ENCODE measurements at regions of chr12 and their contacts with region 1.

Region 1: GRCh38 chr12:2812290-2813213 is at the start of gene ITFG2:
- DNase-seq: peak; percentile 97 to 99 (median 99)
- H3K4me3 ChIP-seq: peak within 1 kb of the TSS; percentile 75 to 95 (median 88)
- H3K27ac ChIP-seq: peak within 1 kb of the TSS; percentile 81 to 88
- H3K4me1 ChIP-seq: peaks cover 9 to 25% (median 16%) of the 10 kb centered on the region in 4 experiments
- H3K27me3 ChIP-seq: no peaks in the 10 kb centered on the region

Region 2: DNA sequence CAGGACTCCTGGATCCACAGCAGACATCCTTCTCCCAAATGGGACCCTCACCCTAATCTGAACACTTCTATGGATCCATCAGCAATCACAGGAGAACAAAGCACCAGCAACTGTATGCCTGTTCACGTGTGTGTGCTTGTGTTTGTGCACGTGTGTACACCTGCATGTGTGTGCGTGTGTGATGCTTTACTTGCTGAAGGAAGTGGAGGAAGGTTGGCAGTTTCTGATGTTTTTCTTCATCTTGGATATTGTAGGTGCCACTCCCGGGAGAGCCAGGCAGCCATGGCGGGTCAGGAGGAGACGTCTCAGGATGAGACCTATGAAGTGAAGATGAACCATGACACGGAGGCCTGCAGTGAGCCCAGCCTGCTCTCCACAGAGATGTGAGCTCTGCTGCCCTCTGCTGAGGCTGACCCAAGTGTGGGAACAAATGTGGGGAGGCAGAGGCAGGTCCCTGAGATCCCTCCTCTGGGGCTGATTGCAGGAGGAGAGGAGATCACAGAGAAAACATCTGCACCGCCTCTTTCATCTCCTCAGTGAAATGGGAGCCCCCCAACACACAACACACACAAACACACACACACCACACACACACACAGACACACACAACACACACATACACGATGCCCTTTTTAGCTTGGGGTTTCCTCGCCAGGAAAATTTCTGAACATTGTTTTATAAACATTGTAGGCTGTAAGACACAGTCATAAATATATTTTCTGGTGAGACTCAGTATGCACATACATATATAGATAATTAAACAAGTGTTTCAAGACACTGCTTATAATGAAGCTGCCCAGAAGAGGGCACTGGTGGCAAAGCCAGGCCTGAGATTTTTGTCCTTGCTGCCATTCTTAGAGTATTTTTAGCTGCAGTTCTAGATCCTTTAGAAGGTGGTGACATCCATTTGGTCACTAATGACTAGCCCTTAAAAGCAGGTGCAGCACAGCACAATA is 130.0 kb before region 1 on chr12:
- CTCF ChIA-PET with region 1: interaction called, 25 read pairs
- POLR2A ChIA-PET with region 1: no interaction called
- DNase-seq: peak; percentile 80 to 94 (median 91)
- H3K4me3 ChIP-seq: no peak overlapping the region
- H3K27ac ChIP-seq: no peak overlapping the region
- H3K4me1 ChIP-seq: peaks cover 3 to 20% (median 16%) of the 10 kb centered on the region in 4 experiments
- H3K27me3 ChIP-seq: no peaks in the 10 kb centered on the region

Region 3: DNA sequence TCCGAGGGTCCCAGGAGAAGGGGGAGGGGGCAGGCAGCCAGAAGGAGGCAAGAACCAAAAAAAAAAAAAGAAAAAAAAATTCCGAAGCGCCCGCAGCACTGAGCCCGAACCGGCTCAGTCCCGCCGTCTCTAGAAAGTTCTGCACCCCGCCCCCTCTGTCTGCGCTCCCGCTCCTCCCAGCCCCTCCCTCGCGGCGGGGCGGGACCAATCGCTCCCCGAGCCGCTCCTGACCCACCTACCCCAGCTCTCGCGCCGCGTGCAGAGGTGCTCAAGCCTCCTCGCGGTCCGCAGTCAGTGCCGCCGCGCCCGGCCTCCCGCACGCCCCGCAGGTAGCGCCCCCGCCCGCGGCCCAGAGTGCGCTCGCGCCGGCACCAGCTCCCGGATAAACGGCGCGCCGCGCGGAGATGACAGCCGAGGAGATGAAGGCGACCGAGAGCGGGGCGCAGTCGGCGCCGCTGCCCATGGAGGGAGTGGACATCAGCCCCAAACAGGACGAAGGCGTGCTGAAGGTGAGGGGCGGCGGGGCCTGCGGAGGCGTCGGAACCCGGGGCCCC is 17.7 kb before region 1 on chr12 and contains the start of gene FKBP4:
- CTCF ChIA-PET with region 1: interaction called, 16 read pairs
- POLR2A ChIA-PET with region 1: interaction called, 3 read pairs
- DNase-seq: peak; percentile 85 to 89 (median 87)
- H3K4me3 ChIP-seq: peak within 1 kb of the TSS; percentile 62 to 87 (median 82)
- H3K27ac ChIP-seq: peak within 1 kb of the TSS in 1 of 2 experiments; percentile 38
- H3K4me1 ChIP-seq: peaks cover 7 to 39% (median 34%) of the 10 kb centered on the region in 4 experiments
- H3K27me3 ChIP-seq: no peaks in the 10 kb centered on the region

Region 4: GRCh38 chr12:2825132-2825531 is 12.6 kb after region 1 on chr12:
- CTCF ChIA-PET with region 1: interaction called, 14 read pairs
- POLR2A ChIA-PET with region 1: no interaction called
- DNase-seq: no peak
- H3K4me3 ChIP-seq: no peak overlapping the region
- H3K27ac ChIP-seq: no peak overlapping the region
- H3K4me1 ChIP-seq: no peaks in the 10 kb centered on the region
- H3K27me3 ChIP-seq: no peaks in the 10 kb centered on the region

Measured in common myeloid progenitor, CD34-positive (primary cell).